PC-3 (cell line): ENCODE measurements at regions of chr3 and their contacts with region 1.

Region 1: DNA sequence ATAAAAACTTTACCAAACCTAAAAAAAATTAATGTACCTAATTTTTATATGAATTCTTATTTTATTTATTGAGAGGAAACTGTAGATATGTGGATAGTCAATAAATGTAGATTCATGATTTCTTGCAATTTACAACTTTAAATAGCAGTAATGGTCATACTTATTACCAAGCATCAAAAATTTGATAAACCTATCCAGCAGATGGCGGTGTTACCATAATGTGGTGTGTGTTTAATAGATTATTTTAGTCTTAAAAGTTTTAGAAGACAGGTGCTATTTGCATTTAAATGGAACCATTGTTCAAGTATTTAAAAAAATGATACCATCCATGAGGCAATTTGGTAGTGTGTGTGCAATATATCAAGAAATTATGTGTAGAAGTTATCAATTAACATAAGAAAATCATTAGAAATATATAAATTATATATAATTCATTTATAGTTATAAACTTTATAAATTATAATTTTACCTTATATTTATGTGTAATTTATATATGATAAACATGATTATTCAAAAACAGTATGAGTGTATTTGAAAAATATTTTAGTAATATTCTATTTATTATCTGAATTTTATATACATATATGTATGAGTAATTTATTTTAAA is 176.0 kb upstream of the BCHE start:
- DNase-seq: peak; percentile 81
- ATAC-seq: peak; percentile 38; the same call in 1 of the 2 replicates
- H3K4me3 ChIP-seq: no peak overlapping the region
- H3K27ac ChIP-seq: no peak overlapping the region
- H3K4me1 ChIP-seq: no peaks in the 10 kb centered on the region
- H3K27me3 ChIP-seq: no peaks in the 10 kb centered on the region
- CTCF ChIP-seq: peak; percentile 75

Region 2: GRCh38 chr3:166304556-166304955 is 291.4 kb after region 1 on chr3:
- CTCF ChIA-PET with region 1: no interaction called
- POLR2A ChIA-PET with region 1: no interaction called
- intact Hi-C with region 1: loop called (anchors 10 kb)
- DNase-seq: peak; percentile 67
- ATAC-seq: peak; percentile 52
- H3K4me3 ChIP-seq: no peak overlapping the region
- H3K27ac ChIP-seq: no peak overlapping the region
- H3K4me1 ChIP-seq: peaks cover 22% of the 10 kb centered on the region
- H3K27me3 ChIP-seq: no peaks in the 10 kb centered on the region
- CTCF ChIP-seq: peak; percentile 55

Region 3: GRCh38 chr3:166685246-166685645 is 672.1 kb after region 1 on chr3:
- CTCF ChIA-PET with region 1: interaction called, 4 read pairs
- POLR2A ChIA-PET with region 1: no interaction called
- intact Hi-C with region 1: loop called (anchors 1 kb)
- DNase-seq: peak; percentile 47
- ATAC-seq: peak; percentile 74
- H3K4me3 ChIP-seq: no peak overlapping the region
- H3K27ac ChIP-seq: no peak overlapping the region
- H3K4me1 ChIP-seq: peaks cover 3% of the 10 kb centered on the region; the same call in 1 of the 2 replicates
- H3K27me3 ChIP-seq: no peaks in the 10 kb centered on the region
- CTCF ChIP-seq: peak; percentile 57

Region 4: GRCh38 chr3:167151636-167152035 is 1138.5 kb after region 1 on chr3:
- CTCF ChIA-PET with region 1: no interaction called
- POLR2A ChIA-PET with region 1: no interaction called
- intact Hi-C with region 1: loop called (anchors 1 kb)
- DNase-seq: no peak
- ATAC-seq: no peak
- H3K4me3 ChIP-seq: no peak overlapping the region
- H3K27ac ChIP-seq: no peak overlapping the region
- H3K4me1 ChIP-seq: no peaks in the 10 kb centered on the region
- H3K27me3 ChIP-seq: no peaks in the 10 kb centered on the region
- CTCF ChIP-seq: no peak